Head of caudate nucleus (tissue), 42 donors: ENCODE measurements at regions of chr4 and their contacts with region 1.

Region 1: DNA sequence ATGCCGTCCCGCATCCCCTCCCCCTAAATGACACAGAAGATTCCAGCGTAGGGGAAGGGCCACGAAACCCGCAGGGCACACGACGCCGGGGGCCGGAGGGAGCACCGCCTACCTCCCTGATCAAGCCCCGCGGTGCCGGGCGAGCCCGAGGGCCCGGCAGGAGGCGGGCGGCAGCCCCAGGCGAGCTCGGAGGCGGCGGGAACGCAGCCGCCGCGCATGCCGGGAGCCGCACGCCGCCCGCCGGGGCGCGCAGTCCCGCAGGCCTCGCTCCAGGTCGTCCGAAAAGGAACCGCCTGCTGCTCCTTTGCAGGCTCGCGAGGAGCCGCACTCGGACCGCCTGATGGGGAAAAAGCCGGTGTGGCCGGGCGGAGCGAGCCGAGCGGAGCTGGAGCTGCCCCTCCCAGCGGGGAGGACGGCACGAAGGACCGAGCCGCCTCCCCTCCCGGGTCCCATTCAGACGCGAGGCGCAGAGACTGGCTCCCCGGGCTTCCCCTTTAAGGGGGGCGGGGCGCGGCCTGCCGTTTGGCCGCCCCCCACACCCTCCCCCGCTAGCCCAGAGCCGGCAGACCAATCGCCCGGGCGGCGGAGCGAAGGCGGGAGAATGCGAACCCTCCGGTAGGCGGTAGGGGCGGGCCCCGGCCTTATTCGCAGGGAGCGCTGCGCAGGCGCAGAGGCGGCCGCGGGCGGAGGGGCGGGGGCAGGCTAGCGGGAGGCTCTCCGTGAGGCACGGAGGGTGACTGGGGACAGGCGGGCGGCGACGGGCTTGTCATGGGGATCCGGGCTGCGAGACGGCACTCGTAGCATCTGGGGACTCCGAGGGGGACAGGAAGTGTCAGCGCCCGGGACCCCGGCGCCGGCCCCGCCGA is 561 bp upstream of the ING2 start:
- DNase-seq: peak; percentile 94 to 100 (median 99)

Region 2: DNA sequence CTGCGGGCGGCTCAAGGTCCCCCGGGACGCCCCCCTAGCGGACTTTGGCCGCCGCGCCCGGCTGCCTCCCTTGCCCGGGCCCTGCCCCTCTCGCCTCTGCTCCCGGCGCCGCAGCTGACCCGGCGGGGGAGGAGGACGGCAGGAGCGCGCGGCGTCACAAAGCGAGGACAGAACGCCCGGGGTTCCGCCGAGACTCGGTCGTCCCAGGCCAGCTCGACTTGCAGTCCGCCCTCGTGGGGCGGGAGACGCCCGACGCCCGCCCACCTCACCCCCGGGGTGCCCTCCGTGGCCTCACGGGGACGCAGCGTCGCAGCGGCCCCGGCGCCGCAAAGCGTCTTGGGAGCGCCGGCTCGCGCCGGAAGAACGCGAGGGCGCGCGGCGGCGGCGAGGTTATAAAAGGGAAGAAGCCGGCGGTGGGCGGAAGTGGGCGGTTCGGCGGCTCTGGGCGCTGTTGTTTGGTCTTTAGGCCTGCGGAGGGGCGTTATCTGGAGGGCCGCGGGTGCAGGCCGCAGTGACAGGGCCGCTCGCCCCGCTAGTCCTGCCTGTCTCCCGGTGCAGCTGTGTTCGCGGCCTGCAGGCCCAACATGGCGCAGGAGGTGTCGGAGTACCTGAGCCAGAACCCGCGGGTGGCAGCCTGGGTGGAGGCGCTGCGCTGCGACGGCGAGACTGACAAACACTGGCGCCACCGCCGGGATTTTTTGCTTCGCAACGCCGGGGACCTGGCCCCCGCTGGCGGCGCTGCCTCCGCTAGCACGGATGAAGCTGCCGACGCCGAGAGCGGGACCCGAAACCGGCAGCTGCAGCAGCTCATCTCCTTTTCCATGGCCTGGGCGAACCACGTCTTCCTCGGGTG is 59.9 kb before region 1 on chr4 and contains the start of gene CDKN2AIP:
- intact Hi-C with region 1: loop called (anchors 2 kb)
- DNase-seq: peak; percentile 71 to 96 (median 91)

Region 3: DNA sequence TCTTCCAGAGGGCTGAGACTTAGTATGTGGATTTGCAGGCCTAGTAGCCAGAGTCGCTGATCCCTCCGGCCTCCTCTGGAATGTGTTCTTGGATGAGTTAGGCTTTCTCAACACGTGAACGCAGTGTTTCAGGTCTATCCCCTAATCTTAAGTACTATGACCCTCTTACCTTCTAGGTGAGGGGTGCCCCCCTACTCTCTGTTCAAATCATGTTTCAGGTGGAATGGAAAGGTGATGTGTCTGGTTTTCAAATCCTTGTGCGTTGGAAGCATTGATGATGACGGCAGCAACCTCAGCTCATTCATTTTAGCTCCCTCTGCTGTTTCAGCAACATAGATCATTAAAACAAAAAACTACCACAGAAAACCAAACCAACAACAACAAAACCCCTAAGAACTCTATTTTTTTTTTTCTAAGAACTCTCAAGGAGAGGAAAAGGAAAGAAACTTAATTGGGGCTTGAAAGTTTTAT is 98.3 kb after region 1 on chr4:
- intact Hi-C with region 1: no loop called
- DNase-seq: peak in 7 of 42 donors; percentile 8 to 23 (median 15)

Region 4: DNA sequence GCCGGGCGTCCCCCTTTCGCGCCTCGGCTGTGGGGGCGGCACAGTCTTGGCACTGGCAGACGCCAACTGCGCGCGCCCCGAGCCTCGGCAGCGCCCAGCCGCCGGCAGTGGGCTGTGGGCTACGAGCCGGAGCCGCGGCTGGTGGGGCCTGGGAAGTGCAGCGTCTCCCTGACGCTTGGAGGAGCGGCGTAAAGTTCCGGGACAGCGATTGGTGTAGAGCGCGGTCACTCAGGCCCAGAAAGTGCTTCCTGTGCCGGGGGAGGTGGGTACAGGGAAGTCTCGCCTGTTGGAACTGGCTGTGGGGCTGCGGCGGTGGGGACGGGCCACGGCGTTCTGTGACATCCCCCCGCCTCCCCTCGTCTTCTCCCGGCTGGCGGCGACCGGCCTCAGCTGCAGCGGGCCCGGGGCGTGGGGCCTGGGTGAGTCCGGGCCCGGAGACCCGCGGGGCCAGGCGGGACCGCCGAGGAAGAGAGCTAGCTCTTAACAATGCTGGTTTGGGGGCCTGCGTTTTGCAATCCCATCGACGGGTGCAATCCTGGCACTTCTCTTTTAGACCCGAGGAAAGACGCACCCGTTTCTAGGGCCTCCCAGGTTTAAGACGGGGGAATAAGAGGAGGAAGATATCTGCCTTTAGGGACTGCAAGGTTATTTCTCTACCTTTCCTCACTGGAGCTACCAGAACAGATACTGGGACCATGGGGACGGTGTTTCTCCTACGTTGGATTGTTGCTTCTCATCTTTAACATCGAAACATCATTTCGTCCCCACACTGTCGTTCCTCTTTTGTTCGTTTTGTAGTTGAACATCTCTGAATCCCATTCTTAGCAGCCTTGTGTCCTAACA is 155.0 kb after region 1 on chr4 and contains the starts of genes RWDD4 and TRAPPC11:
- intact Hi-C with region 1: loop called (anchors 5 kb)
- DNase-seq: peak; percentile 95 to 99 (median 98)

Region 5: DNA sequence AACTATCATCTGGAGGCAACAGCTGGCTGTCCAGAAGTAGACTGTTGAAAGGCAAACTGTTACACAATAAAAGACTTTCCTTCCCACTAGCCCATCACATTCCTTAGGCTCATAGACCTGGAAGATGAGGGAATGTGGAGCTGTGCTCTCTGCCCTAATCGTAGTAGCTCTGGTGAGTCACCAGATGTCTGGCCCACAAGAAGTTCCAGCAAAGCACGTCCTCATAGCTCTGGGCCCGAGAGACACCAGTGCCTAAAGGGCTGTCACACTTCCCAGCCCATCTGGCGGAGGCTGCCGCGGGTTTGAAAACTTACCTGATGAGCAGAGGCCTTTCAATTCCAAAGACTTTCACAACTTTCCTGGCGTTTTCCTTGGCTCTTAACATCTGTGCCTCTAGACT is 319.1 kb after region 1 on chr4:
- intact Hi-C with region 1: no loop called
- DNase-seq: no peak